Esophagus muscularis mucosa (tissue), 4 donors: ENCODE measurements at regions of chrX and their contacts with region 1.

Region 1: GRCh38 chrX:103845165-103845653 is 13.2 kb upstream of the RAB9B start:
- DNase-seq: no peak
- H3K4me3 ChIP-seq: no peak overlapping the region
- H3K27ac ChIP-seq: no peak overlapping the region
- H3K4me1 ChIP-seq: peaks cover 0 to 4% (median 0%) of the 10 kb centered on the region in 4 donors
- H3K27me3 ChIP-seq: no peaks in the 10 kb centered on the region
- CTCF ChIP-seq: peak; percentile 57 to 66 (median 58)
- EP300 ChIP-seq: no peak
- POLR2A ChIP-seq: no peak

Region 2: DNA sequence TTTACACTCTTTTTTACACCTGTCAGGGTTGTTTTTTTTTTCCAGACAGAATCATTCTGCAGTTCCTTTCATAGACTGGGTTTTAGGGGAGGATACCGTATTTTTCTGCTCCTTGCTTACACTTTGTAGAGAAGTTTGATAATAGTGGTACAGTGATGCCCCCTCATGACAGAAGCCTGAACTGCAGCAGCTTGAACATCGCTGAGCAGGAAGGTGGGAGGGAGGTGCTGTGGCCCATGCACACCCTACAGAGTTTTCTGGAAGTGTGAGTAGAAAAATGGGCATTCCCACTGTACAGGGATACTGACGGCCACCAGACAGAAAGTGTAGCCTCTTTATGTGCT is 380.5 kb before region 1 on chrX:
- intact Hi-C with region 1: no loop called
- DNase-seq: peak; percentile 93
- H3K4me3 ChIP-seq: peak overlapping the region; percentile 35 to 45 (median 38)
- H3K27ac ChIP-seq: no peak overlapping the region
- H3K4me1 ChIP-seq: peaks cover 0 to 3% (median 0%) of the 10 kb centered on the region in 4 donors
- H3K27me3 ChIP-seq: no peaks in the 10 kb centered on the region
- CTCF ChIP-seq: peak; percentile 66 to 75 (median 74)
- EP300 ChIP-seq: no peak
- POLR2A ChIP-seq: no peak

Region 3: GRCh38 chrX:103520386-103520785 is 324.8 kb before region 1 on chrX:
- intact Hi-C with region 1: no loop called
- DNase-seq: no peak
- H3K4me3 ChIP-seq: no peak overlapping the region
- H3K27ac ChIP-seq: no peak overlapping the region
- H3K4me1 ChIP-seq: no peaks in the 10 kb centered on the region
- H3K27me3 ChIP-seq: no peaks in the 10 kb centered on the region
- CTCF ChIP-seq: no peak
- EP300 ChIP-seq: no peak
- POLR2A ChIP-seq: no peak

Region 4: GRCh38 chrX:103941201-103941975 is 96.2 kb after region 1 on chrX:
- intact Hi-C with region 1: loop called (anchors 1 kb)
- DNase-seq: no peak
- H3K4me3 ChIP-seq: no peak overlapping the region
- H3K27ac ChIP-seq: no peak overlapping the region
- H3K4me1 ChIP-seq: no peaks in the 10 kb centered on the region
- H3K27me3 ChIP-seq: peaks cover 0 to 11% (median 0%) of the 10 kb centered on the region in 4 donors
- CTCF ChIP-seq: peak; percentile 41 to 51 (median 41)
- EP300 ChIP-seq: no peak
- POLR2A ChIP-seq: no peak